Panc1 (cell line): ENCODE measurements at regions of chr1 and their contacts with region 1.

Region 1: GRCh38 chr1:205680073-205680851 is at the start of gene SLC45A3:
- DNase-seq: no peak
- ATAC-seq: peak; percentile 86
- H3K4me3 ChIP-seq: peak within 1 kb of the TSS; percentile 66 to 75
- H3K27ac ChIP-seq: peak within 1 kb of the TSS; percentile 40; the same call in 1 of the 2 replicates
- H3K4me1 ChIP-seq: peaks cover 15% of the 10 kb centered on the region
- H3K27me3 ChIP-seq: no peaks in the 10 kb centered on the region
- CTCF ChIP-seq: no peak
- total RNA-seq, gene SLC45A3: 3.0 TPM

Region 2: DNA sequence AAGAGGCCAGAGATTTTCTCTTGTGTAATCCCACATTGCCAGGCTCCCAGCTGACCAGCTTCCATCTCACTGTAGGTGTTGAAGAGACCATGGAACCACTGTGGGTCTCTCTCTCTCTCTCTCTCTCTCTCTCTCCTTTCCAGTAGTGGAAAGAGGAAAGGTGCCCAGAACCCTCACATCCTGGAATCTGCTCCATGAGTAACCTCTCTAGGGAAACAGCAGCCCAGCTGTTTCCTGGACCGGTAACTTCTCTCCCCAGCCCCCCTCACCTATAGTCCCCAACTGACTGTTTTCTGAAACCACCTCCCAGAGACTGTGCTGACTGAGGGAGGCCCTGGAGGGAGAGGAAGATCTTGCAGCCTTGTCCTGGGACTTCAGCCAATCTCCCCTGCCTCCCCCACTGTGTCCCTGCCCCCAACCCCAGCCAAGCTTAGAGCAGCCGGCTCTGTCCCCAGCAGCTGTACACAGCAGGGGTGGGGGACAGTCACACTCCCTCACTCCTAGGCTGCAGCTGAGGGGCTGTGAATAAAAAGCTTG is 20.7 kb after region 1 on chr1:
- CTCF ChIA-PET with region 1: interaction called, 3 read pairs
- POLR2A ChIA-PET with region 1: interaction called, 12 read pairs
- in situ Hi-C with region 1: no loop called
- intact Hi-C with region 1: no loop called
- DNase-seq: no peak
- ATAC-seq: no peak
- H3K4me3 ChIP-seq: no peak overlapping the region
- H3K27ac ChIP-seq: no peak overlapping the region
- H3K4me1 ChIP-seq: no peaks in the 10 kb centered on the region
- H3K27me3 ChIP-seq: no peaks in the 10 kb centered on the region
- CTCF ChIP-seq: no peak

Region 3: DNA sequence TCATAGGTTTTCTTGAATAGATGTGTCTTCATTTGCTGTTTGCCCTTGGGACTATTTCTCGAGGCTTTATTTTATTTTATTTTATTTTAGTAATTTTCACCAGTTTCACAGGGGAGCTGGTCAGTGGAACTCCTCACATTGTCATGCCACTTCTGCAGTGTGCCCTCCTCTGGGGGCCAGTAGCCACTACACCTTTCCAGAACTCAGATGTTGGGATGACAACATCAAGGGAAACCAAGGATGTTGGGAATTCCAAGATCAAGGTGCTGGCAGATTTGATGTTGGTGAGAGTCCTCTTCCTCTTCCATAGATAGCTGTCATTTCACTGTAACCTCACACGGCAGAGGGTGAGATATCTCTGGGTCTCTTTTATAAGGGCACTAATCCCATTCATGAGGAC is 227.5 kb after region 1 on chr1:
- CTCF ChIA-PET with region 1: no interaction called
- POLR2A ChIA-PET with region 1: no interaction called
- in situ Hi-C with region 1: no loop called
- intact Hi-C with region 1: no loop called
- DNase-seq: no peak
- ATAC-seq: peak; percentile 85
- H3K4me3 ChIP-seq: no peak overlapping the region
- H3K27ac ChIP-seq: no peak overlapping the region
- H3K4me1 ChIP-seq: no peaks in the 10 kb centered on the region
- H3K27me3 ChIP-seq: peaks cover 2% of the 10 kb centered on the region; the same call in 1 of the 2 replicates
- CTCF ChIP-seq: peak; percentile 82